ENCODE measurements at regions of chr21 and their contacts with region 1.

Region 1: GRCh38 chr21:17270229-17270628 is 242.6 kb upstream of the CXADR start:
- DNase-seq: peak; percentile 13
- H3K4me3 ChIP-seq: no peak overlapping the region
- H3K27ac ChIP-seq: no peak overlapping the region
- H3K4me1 ChIP-seq: no peaks in the 10 kb centered on the region
- H3K27me3 ChIP-seq: no peaks in the 10 kb centered on the region
- CTCF ChIP-seq: peak in 1 of 2 donors; percentile 12

Region 2: DNA sequence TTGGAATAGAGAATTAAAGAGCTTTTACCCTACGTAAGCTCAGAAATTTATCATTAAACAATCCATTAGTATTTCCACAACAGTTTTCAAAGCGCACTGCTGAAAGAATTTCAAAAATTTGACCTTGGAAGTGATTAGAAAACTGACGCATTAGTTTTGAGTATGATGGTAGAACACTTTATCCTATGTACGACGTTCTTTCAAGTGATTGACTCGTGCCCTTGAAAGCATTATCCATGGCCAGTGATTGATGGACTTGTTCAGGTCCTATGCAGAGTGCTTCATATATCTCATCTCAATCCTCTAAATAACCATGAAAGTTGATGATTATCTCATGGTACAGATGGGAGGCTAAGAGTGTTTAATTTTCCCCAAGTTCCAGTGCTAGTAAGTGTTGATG is 843.3 kb before region 1 on chr21:
- CTCF ChIA-PET with region 1: no interaction called
- dilution Hi-C with region 1: no loop called
- in situ Hi-C with region 1: no loop called
- intact Hi-C with region 1: loop called (anchors 5 kb)
- DNase-seq: no peak
- H3K4me3 ChIP-seq: no peak overlapping the region
- H3K27ac ChIP-seq: no peak overlapping the region
- H3K4me1 ChIP-seq: no peaks in the 10 kb centered on the region
- H3K27me3 ChIP-seq: no peaks in the 10 kb centered on the region
- CTCF ChIP-seq: no peak

Region 3: DNA sequence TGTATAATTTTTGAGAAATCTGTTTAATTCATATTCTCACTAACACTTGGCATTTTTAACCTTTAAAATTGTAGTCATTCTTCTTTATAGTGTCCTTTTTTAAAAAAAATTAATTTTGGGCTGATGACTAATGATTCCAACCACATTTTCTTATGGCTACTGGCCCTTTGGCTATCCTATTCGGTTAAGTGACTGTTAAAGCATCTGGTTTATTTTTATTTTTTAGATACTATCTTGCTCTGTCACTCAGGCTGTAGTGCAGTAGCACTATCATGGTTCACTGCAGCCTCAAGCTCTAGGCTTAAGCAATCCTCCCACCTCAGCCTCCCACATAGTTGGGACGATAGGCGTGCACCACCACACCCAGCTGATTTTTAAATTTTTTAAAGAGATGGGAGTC is 480.6 kb before region 1 on chr21:
- CTCF ChIA-PET with region 1: no interaction called
- dilution Hi-C with region 1: no loop called
- in situ Hi-C with region 1: no loop called
- intact Hi-C with region 1: no loop called
- DNase-seq: no peak
- H3K4me3 ChIP-seq: no peak overlapping the region
- H3K27ac ChIP-seq: no peak overlapping the region
- H3K4me1 ChIP-seq: no peaks in the 10 kb centered on the region
- H3K27me3 ChIP-seq: no peaks in the 10 kb centered on the region
- CTCF ChIP-seq: no peak

Region 4: DNA sequence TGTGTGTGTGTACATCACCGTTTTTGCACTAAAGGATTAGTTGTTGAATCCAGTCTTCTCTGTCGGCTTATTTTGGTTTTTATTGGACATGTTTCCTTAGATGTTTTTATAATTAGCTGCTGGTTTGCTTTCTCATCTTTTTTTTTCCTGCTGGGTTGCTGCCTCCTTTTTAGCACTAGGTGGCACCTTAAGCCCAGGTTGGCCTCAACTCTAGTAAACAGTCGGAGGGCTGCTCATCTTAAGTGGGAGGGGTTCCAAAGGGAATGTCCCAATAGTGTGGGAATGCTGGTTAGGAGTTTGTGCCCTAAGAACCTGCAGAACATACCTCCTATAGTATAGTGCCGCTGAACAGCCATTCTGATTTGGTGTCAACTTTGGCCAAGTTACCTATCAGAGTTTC is 327.5 kb before region 1 on chr21:
- CTCF ChIA-PET with region 1: no interaction called
- dilution Hi-C with region 1: no loop called
- in situ Hi-C with region 1: no loop called
- intact Hi-C with region 1: loop called (anchors 5 kb)
- DNase-seq: peak; percentile 8
- H3K4me3 ChIP-seq: no peak overlapping the region
- H3K27ac ChIP-seq: no peak overlapping the region
- H3K4me1 ChIP-seq: no peaks in the 10 kb centered on the region
- H3K27me3 ChIP-seq: no peaks in the 10 kb centered on the region
- CTCF ChIP-seq: no peak

Region 5: DNA sequence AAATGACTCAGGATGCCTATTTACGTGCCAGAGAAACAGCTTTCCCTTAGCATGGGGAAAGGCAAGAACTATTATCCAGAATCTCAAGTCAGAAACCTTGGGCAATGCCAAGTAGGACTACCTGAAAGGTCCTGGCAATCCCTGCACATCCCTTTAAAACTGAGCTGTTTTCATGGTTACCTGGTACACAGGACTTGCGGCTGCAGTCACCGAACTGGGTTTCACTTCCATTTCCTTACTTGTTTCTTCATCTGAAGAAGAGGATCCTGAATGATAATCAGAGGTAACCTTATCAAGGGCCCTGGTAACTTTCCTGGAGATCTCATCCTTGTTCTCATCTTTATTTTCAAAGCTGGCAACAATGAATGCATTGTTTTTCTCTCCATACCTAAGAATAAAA is 328.2 kb after region 1 on chr21:
- CTCF ChIA-PET with region 1: no interaction called
- dilution Hi-C with region 1: no loop called
- in situ Hi-C with region 1: no loop called
- intact Hi-C with region 1: no loop called
- DNase-seq: no peak
- H3K4me3 ChIP-seq: no peak overlapping the region
- H3K27ac ChIP-seq: no peak overlapping the region
- H3K4me1 ChIP-seq: peaks cover 2% of the 10 kb centered on the region
- H3K27me3 ChIP-seq: no peaks in the 10 kb centered on the region
- CTCF ChIP-seq: no peak

Measured in mammary epithelial cell (primary cell).